Activated CD4-positive, alpha-beta T cell treated with anti-CD3 and anti-CD28 coated beads, Interleukin-2, amount 10 ng/mL, durations not matched to agents 24 days and 14 days (primary cell): ENCODE measurements at regions of chr17 and their contacts with region 1.

Region 1: GRCh38 chr17:732067-732901 is at the start of gene TLCD3A:
- DNase-seq: peak; percentile 91
- H3K4me3 Mint-ChIP-seq: peak within 1 kb of the TSS; percentile 93
- H3K27ac Mint-ChIP-seq: peak within 1 kb of the TSS; percentile 94
- H3K4me1 Mint-ChIP-seq: peaks cover 22% of the 10 kb centered on the region
- H3K27me3 Mint-ChIP-seq: peaks cover 4% of the 10 kb centered on the region
- total RNA-seq, gene TLCD3A: 42.3 and 43.1 TPM in 2 replicates

Region 2: DNA sequence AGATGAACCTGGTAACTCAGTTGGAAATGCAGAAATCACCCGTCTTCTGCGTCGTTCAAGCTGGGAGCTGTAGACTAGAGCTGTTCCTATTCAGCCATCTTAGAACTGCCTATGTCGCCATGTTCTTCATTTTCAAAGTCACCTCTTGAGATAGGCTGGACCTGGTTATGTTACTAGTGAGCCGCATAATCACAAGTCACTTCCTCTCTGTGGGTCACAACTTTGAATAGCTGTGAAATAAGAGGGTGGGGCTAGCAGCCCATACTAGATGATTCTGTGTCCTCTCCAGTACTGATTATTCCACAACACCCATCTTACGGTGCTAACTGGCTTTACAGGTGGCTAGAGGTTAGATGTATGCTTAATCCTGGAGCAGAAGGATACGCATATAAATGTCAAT is 91.8 kb before region 1 on chr17:
- intact Hi-C with region 1: no loop called
- DNase-seq: no peak
- H3K4me3 Mint-ChIP-seq: no peak overlapping the region
- H3K27ac Mint-ChIP-seq: no peak overlapping the region
- H3K4me1 Mint-ChIP-seq: peaks cover 6% of the 10 kb centered on the region
- H3K27me3 Mint-ChIP-seq: no peaks in the 10 kb centered on the region

Region 3: GRCh38 chr17:681738-682529 is 50.4 kb before region 1 on chr17:
- intact Hi-C with region 1: no loop called
- DNase-seq: peak; percentile 59
- H3K4me3 Mint-ChIP-seq: peak overlapping the region; percentile 31
- H3K27ac Mint-ChIP-seq: no peak overlapping the region
- H3K4me1 Mint-ChIP-seq: peaks cover 17% of the 10 kb centered on the region
- H3K27me3 Mint-ChIP-seq: no peaks in the 10 kb centered on the region

Region 4: GRCh38 chr17:716238-716637 is 16.0 kb before region 1 on chr17:
- intact Hi-C with region 1: loop called (anchors 2 kb)
- DNase-seq: no peak
- H3K4me3 Mint-ChIP-seq: peak overlapping the region; percentile 37
- H3K27ac Mint-ChIP-seq: no peak overlapping the region
- H3K4me1 Mint-ChIP-seq: peaks cover 20% of the 10 kb centered on the region
- H3K27me3 Mint-ChIP-seq: peaks cover 2% of the 10 kb centered on the region

Region 5: DNA sequence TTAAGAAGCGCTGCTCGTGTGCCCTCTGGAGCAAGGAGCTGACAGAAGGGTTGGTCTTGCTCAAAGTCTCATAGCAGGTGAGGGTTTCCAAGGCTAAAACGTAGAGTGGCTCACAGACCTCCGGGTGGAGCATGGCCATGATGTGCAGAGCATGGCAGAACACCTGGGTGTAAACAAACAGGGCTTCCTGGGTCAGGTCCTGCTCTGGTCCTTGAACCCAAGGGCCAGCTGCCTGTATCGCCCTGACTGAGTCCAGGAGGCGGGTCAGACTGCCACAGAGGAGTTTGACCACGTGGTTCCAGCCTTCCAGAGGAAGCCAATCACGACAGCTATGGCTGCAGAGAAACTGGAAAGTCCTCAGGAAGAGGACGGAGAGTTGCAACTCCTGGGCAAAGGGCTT is 12.7 kb after region 1 on chr17:
- intact Hi-C with region 1: no loop called
- DNase-seq: no peak
- H3K4me3 Mint-ChIP-seq: no peak overlapping the region
- H3K27ac Mint-ChIP-seq: no peak overlapping the region
- H3K4me1 Mint-ChIP-seq: peaks cover 27% of the 10 kb centered on the region
- H3K27me3 Mint-ChIP-seq: no peaks in the 10 kb centered on the region

Region 6: GRCh38 chr17:781805-782731 is 49.8 kb after region 1 on chr17 and contains the starts of genes GLOD4 and MRM3:
- intact Hi-C with region 1: loop called (anchors 5 kb)
- DNase-seq: peak; percentile 100
- H3K4me3 Mint-ChIP-seq: peak within 1 kb of the TSS; percentile 96
- H3K27ac Mint-ChIP-seq: peak within 1 kb of the TSS; percentile 92
- H3K4me1 Mint-ChIP-seq: peaks cover 26% of the 10 kb centered on the region
- H3K27me3 Mint-ChIP-seq: no peaks in the 10 kb centered on the region
- total RNA-seq, gene GLOD4: 82.4 and 83.2 TPM in 2 replicates
- total RNA-seq, gene MRM3: 32.5 and 33.1 TPM in 2 replicates

Region 7: GRCh38 chr17:903981-904481 is 171.7 kb after region 1 on chr17:
- intact Hi-C with region 1: no loop called
- DNase-seq: no peak
- H3K4me3 Mint-ChIP-seq: no peak overlapping the region
- H3K27ac Mint-ChIP-seq: no peak overlapping the region
- H3K4me1 Mint-ChIP-seq: no peaks in the 10 kb centered on the region
- H3K27me3 Mint-ChIP-seq: peaks cover 21% of the 10 kb centered on the region